Activated CD8-positive, alpha-beta memory T cell treated with anti-CD3 and anti-CD28 coated beads, Interleukin-2, amount 10 ng/mL, durations not matched to agents 7 days and 5 days (primary cell): ENCODE measurements at regions of chr1 and their contacts with region 1.

Region 1: DNA sequence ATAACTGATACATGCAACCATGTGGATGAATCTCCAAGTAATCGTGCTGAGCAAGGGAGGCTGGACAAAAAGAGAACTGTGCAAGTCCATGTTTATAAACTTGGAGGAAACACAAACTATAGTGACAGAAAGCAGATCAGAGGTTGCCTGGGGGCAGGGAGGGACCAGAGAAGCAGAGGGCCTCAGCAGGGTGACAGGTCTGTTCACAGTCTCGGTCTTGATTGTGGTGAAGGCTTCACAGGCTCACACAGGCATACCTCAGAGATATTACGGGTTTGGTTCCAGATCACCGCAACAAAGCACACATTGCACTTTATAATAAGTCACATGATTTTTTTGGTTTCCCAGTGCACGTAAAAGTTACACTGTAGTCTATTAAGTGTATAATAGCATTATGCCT is 28.5 kb downstream of the ACOT7 start:
- DNase-seq: peak; percentile 57
- ATAC-seq: peak; percentile 78
- H3K4me3 Mint-ChIP-seq: no peak overlapping the region
- H3K27ac Mint-ChIP-seq: peak overlapping the region; percentile 58
- H3K4me1 Mint-ChIP-seq: peaks cover 20% of the 10 kb centered on the region
- H3K27me3 Mint-ChIP-seq: no peaks in the 10 kb centered on the region

Region 2: DNA sequence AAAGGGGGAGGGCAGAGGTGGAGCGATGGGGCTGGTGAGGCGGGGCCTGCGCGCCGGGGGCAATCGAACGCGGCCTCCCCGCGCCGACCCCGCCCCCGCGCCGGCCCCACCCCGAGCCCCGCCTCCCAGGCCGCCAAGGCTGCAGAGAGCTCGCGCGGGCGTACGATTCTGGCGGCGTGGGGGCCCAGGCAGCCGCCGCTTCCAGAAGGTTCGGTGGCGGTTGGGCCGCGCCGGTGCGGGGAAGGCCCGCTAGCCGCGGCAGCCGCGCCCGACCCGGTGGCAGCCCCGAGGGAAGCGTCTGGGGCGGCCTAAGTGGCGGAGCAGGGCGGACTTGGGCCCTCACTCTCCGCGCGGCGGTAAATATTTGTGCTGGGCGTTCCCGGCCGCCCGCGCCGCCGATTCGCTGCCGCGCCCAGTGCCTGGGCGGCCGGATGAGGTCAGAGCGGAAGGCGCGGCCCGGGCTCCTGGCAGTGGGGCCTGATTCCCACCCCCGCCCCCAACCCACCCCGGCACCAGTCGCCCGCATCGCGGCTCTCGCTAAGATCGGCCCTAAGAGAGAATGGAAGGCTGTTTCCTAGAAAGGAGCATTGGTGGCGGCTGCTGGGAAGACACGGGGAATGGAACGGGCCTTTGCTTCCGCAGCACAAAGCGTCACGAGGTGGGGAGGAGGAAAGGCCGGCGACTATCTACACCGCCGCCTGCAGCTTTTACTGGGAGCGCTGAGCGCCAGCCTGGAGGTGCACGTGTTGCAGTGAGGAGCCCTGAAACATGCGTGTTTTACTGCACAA is 28.5 kb after region 1 on chr1 and contains the start of gene ACOT7:
- CTCF ChIA-PET with region 1: interaction called, 44 read pairs
- DNase-seq: peak; percentile 93
- ATAC-seq: peak; percentile 89
- H3K4me3 Mint-ChIP-seq: peak within 1 kb of the TSS; percentile 84
- H3K27ac Mint-ChIP-seq: peak within 1 kb of the TSS; percentile 92
- H3K4me1 Mint-ChIP-seq: peaks cover 35% of the 10 kb centered on the region
- H3K27me3 Mint-ChIP-seq: no peaks in the 10 kb centered on the region
- total RNA-seq, gene ACOT7: 81.3 to 87.0 TPM